Right ventricle myocardium superior (tissue), 1 donor: ENCODE measurements at regions of chr15 and their contacts with region 1.

Region 1: DNA sequence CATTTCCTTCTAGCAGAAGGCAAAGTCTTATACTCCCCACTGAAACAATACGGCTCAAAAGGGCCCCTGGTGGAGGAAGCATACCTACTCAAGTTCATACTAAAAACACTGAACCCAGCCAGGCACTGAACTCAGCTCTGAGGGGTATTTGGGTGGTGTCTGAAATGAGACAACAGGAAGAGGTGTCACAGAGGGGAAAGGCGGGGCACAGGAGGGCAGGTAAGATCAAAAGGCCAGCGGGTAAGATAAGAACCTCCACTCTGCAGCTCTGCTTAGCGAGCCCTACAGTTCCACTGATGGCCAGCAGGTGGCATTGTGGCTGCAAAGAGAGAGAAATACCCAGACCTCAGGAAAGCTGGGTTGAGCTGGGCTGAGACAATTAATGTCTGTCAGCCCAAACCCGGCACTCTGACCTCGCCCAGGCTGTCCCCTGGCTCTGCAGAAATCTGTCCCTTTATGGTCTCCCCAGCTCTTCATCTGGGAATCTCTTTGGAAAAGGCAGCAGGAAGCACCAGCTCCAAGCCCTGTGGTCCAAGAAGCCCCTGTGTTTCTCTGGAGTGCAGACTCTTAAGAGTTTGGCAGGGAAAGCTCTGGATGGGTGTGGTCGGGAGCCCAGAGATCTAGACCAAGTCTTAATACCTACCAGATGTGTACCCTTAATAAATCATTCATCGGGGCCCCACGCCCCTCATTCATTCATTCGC is 8.4 kb downstream of the MFGE8 start:
- DNase-seq: peak; percentile 90
- ATAC-seq: peak; percentile 84

Region 2: DNA sequence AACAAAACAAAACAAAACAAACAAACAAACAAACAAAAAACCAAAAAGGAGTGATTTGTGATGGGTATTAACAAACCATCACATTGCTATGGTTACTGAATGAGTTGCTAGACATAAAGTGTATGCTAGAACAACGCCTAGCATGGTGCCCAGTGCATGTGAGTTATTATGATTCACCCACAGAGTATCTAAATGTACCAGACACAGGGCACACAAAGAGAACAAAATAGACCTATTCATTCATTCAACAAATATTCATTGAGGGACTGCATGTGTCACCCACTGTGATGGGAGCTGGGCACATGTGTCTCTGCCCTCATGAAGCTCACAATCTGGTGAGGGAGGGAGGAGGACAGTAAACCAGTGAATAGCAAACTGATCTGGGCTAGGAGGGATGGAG is 113.1 kb before region 1 on chr15:
- intact Hi-C with region 1: no loop called
- DNase-seq: no peak
- ATAC-seq: no peak

Region 3: DNA sequence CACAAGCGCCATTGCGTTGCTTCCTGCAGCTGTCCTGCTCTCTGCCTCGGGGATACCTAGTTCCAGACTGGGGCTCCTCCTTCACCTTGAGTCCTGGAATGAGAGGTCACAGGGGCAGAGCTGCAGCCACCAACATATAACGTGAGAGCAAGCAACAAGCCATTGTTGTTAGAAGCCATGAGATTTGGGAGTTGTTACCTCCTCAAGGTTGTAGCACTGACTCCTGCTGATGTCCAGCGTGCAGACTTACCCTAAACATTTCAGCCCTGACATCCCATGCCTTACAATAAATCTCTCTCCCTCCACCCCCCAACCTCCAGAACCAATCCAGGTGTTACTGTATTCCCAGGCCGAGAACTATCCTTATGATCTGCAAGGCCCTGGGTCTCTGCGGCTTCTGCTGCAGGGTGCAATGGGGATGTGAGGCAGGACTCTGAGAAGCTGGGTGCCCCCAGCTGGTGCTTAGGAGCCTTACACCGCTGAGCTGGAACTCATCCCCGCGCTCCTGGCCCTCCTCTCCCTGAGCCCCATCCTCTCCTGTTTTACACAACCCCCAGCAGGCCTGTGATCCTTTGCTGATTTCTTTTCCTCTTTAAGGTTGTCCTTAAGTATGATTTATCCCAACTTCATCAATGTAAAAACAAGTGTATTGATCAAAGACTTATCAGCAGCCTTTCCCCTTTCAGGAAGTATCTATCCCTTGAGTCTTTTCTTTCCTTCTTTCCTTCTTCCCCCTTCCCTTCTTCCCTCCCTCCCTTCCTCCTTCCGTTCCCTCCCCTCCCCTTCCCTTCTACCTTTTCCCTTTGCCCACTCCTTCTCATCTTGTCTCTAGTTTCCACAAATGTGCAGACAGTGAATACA is 99.3 kb after region 1 on chr15:
- intact Hi-C with region 1: loop called (anchors 2 kb)
- DNase-seq: peak; percentile 70
- ATAC-seq: peak; percentile 73

Region 4: GRCh38 chr15:89017370-89018066 is 112.7 kb after region 1 on chr15:
- intact Hi-C with region 1: loop called (anchors 5 kb)
- DNase-seq: peak; percentile 84
- ATAC-seq: peak; percentile 73

Region 5: DNA sequence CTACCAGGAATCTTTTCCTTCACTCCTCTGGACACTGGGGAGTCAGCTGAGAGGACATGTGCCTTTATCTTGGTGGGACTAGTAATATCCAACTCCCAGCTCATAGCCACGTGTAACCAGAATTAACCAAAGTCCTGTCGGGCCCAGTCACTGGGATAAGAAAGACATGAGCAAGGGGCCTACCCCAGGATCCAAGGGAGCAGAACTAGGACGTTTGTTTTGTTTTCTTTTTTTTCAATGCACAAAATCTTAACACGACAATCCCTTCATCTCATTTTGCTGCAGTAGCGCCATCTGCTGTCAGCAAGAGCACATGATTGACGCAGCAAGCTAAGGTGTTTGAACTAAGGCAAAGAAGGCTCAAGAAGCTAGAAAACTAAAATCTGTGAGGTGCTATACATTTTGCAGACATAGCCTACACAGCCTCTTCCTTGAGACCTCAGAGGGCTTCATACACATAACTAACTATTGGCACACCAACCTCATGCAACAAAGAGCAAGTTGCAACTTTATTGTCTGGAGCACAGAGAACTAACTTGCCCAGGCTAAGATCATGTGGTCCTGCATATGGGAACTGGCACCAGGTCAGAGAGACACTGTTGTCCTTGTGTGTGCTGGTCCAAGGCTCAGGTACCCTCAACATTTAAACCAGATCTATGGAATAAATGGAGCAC is 273.0 kb after region 1 on chr15:
- intact Hi-C with region 1: loop called (anchors 5 kb)
- DNase-seq: peak; percentile 64
- ATAC-seq: peak; percentile 55